ENCODE measurements at regions of chr17 and their contacts with region 1.

Region 1: GRCh38 chr17:59387351-59388068 is 56.1 kb downstream of the YPEL2 start:
- DNase-seq: no peak
- ATAC-seq: no peak
- H3K4me3 ChIP-seq: no peak overlapping the region
- H3K4me3 Mint-ChIP-seq: no peak overlapping the region
- H3K27ac ChIP-seq: no peak overlapping the region
- H3K27ac Mint-ChIP-seq: no peak overlapping the region
- H3K4me1 ChIP-seq: no peaks in the 10 kb centered on the region
- H3K4me1 Mint-ChIP-seq: peaks cover 7 to 22% (median 20%) of the 10 kb centered on the region in 3 donors
- H3K27me3 ChIP-seq: no peaks in the 10 kb centered on the region
- H3K27me3 Mint-ChIP-seq: no peaks in the 10 kb centered on the region

Region 2: DNA sequence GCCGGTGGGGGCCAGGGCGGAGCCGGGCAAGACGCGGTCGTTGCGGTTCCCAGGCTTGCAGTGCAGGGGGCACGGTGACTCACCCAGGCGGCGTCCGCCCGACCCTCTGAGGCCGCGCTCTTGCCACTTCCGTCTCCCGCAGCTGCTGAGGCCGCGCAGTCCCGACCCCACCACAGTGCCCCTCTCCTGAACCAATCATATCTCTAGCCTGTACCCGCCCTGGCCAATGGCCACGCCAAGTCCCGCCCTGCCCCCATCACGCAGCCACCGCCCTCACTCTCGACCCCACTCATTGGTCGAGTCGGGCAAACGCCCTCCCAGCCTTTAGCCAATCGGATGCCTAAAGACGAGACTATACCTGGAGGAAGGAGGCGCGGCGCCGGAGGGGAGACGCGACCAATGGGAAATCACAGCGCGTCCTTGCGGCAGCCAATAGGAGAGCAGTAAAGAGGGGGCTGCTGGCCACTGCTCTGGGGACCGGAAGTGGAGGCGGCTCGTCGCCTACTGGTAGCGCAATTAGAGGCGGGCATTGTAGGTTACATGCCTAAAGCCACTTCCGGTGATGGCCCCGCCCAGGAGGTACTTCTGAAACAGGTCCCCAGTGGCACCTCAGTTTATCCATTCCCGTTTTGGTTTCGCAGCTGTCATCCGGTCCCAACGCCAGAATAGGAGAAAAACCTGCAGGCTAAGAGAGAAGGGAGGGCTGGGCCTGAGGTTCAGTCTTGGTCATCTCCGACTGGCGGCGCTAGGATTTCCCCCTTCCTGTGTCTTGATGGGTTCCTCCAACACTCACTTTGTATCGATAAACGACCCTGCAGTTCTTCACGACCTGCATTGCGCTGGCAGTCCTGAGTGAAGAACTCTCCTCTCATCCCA is 869.5 kb before region 1 on chr17:
- CTCF ChIA-PET with region 1: no interaction called
- POLR2A ChIA-PET with region 1: no interaction called
- DNase-seq: peak; percentile 97 to 100 (median 100)
- ATAC-seq: peak; percentile 79 to 84 (median 82)
- H3K4me3 ChIP-seq: peak overlapping the region; percentile 87 to 98
- H3K4me3 Mint-ChIP-seq: peak overlapping the region; percentile 95 to 97 (median 96)
- H3K27ac ChIP-seq: peak overlapping the region; percentile 75
- H3K27ac Mint-ChIP-seq: peak overlapping the region; percentile 95 to 97
- H3K4me1 ChIP-seq: peaks cover 38 to 43% of the 10 kb centered on the region in 2 experiments
- H3K4me1 Mint-ChIP-seq: peaks cover 41 to 46% (median 42%) of the 10 kb centered on the region in 3 donors
- H3K27me3 ChIP-seq: no peaks in the 10 kb centered on the region
- H3K27me3 Mint-ChIP-seq: no peaks in the 10 kb centered on the region

Region 3: GRCh38 chr17:59335685-59336084 is 51.8 kb before region 1 on chr17:
- CTCF ChIA-PET with region 1: no interaction called
- POLR2A ChIA-PET with region 1: interaction called in 1 of 2 experiments, 11 read pairs
- DNase-seq: no peak
- ATAC-seq: no peak
- H3K4me3 ChIP-seq: no peak overlapping the region
- H3K4me3 Mint-ChIP-seq: peak overlapping the region in 1 of 3 donors; percentile 1
- H3K27ac ChIP-seq: no peak overlapping the region
- H3K27ac Mint-ChIP-seq: no peak overlapping the region
- H3K4me1 ChIP-seq: peaks cover 13 to 31% of the 10 kb centered on the region in 2 experiments
- H3K4me1 Mint-ChIP-seq: peaks cover 62 to 72% (median 67%) of the 10 kb centered on the region in 3 donors
- H3K27me3 ChIP-seq: no peaks in the 10 kb centered on the region
- H3K27me3 Mint-ChIP-seq: no peaks in the 10 kb centered on the region

Region 4: GRCh38 chr17:59406808-59407429 is 19.4 kb after region 1 on chr17:
- CTCF ChIA-PET with region 1: no interaction called
- POLR2A ChIA-PET with region 1: no interaction called
- DNase-seq: no peak
- ATAC-seq: no peak
- H3K4me3 ChIP-seq: no peak overlapping the region
- H3K4me3 Mint-ChIP-seq: no peak overlapping the region
- H3K27ac ChIP-seq: no peak overlapping the region
- H3K27ac Mint-ChIP-seq: no peak overlapping the region
- H3K4me1 ChIP-seq: no peaks in the 10 kb centered on the region
- H3K4me1 Mint-ChIP-seq: no peaks in the 10 kb centered on the region
- H3K27me3 ChIP-seq: no peaks in the 10 kb centered on the region
- H3K27me3 Mint-ChIP-seq: no peaks in the 10 kb centered on the region